ENCODE measurements at regions of chr15 and their contacts with region 1.

Region 1: GRCh38 chr15:74291101-74292071 is 55.3 kb downstream of the CCDC33 start:
- DNase-seq: peak; percentile 99
- H3K4me3 ChIP-seq: peak overlapping the region; percentile 23
- H3K27ac ChIP-seq: peak overlapping the region; percentile 83
- H3K4me1 ChIP-seq: peaks cover 20% of the 10 kb centered on the region
- H3K27me3 ChIP-seq: no peaks in the 10 kb centered on the region
- CTCF ChIP-seq: no peak

Region 2: GRCh38 chr15:74265046-74265639 is 26.2 kb before region 1 on chr15:
- CTCF ChIA-PET with region 1: no interaction called
- POLR2A ChIA-PET with region 1: no interaction called
- intact Hi-C with region 1: loop called (anchors 1 kb)
- DNase-seq: peak; percentile 48
- H3K4me3 ChIP-seq: no peak overlapping the region
- H3K27ac ChIP-seq: no peak overlapping the region
- H3K4me1 ChIP-seq: no peaks in the 10 kb centered on the region
- H3K27me3 ChIP-seq: peaks cover 6% of the 10 kb centered on the region
- CTCF ChIP-seq: no peak

Measured in A673 (cell line).